Heart right ventricle (tissue), 16 donors: ENCODE measurements at regions of chr3 and their contacts with region 1.

Region 1: DNA sequence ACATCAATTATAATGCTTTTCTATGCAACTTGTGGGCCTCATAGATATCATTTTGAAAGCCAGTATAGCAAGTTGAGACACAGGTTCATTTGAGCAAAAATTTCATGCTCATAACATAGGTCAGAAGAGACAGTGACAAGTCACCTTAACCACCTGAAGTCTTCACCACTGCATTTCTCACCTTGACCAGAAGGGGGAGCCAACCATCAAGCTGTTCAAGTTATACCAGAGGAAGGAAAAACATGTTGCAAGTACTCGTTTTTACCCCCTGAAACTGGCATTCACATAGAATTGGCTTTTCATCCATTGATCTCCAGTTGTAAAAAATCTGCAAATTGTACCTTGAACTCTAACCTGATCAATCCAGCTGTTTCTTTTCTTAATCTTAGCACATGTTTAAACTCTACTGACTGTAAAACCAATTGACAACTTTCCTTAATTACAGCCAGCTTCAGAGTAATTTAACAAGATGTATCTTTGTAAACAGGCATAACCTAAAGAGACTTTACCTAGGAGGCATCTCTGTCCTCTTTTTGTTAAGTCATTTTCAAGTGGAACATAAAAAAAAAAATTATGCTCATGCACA is 1.4 kb downstream of the LMOD3 start:
- DNase-seq: peak in 1 of 2 donors; percentile 77
- ATAC-seq: peak in 6 of 8 donors; percentile 38 to 61 (median 44)
- H3K4me3 ChIP-seq: peak overlapping the region in 9 of 10 donors; percentile 28 to 58 (median 49)
- H3K27ac ChIP-seq: peak overlapping the region in 9 of 10 donors; percentile 62 to 88 (median 74)
- H3K4me1 ChIP-seq: peaks cover 0 to 10% (median 6%) of the 10 kb centered on the region in 9 donors
- H3K27me3 ChIP-seq: no peaks in the 10 kb centered on the region
- CTCF ChIP-seq: peak; percentile 78 to 98 (median 93)

Region 2: DNA sequence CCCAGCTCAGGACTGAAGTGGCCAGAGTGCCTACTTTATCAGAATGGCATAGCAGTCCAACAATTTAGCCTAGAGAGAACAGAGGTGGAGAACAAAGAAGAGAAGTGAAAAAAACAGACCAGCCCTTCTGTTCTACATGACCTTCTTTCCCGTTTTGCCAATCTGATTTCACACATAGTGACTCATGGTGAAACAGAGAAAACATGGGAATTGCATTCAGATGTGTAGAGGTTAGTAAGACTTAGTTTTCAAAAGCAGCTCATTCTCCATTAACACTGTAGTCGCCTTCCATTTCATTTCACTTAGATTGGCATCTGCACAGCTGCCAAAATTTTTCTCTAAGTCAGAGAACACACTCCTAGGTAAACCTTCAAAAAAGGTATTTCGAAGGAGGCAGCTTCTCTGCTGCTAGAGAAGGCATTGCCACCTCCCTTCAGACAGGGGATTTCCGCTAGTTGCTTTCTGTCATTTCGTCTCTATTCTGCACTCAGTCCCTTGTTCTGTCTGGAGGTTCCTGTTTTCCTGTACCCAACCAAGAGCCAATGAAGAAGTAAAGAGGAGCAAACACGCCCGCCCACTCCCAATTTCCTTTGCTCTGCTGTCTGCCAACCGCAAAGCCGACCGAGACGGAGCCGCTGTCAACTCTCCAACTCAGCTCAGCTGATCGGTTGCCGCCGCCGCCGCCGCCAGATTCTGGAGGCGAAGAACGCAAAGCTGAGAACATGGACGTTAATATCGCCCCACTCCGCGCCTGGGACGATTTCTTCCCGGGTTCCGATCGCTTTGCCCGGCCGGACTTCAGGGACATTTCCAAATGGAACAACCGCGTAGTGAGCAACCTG is 36.4 kb before region 1 on chr3 and contains the start of gene ARL6IP5:
- intact Hi-C with region 1: loop called in 3 of 10 experiments (anchors 5 kb)
- DNase-seq: peak; percentile 93 to 95
- ATAC-seq: peak; percentile 65 to 83 (median 76)
- H3K4me3 ChIP-seq: peak within 1 kb of the TSS; percentile 67 to 94 (median 91)
- H3K27ac ChIP-seq: peak within 1 kb of the TSS; percentile 91 to 97 (median 96)
- H3K4me1 ChIP-seq: peaks cover 11 to 85% (median 74%) of the 10 kb centered on the region in 9 donors
- H3K27me3 ChIP-seq: no peaks in the 10 kb centered on the region
- CTCF ChIP-seq: no peak
- total RNA-seq, gene ARL6IP5: 151 to 226 (median 195) TPM

Region 3: GRCh38 chr3:69200384-69201068 is 79.6 kb after region 1 on chr3:
- intact Hi-C with region 1: no loop called
- DNase-seq: peak in 1 of 2 donors; percentile 35
- ATAC-seq: peak; percentile 61 to 87 (median 75)
- H3K4me3 ChIP-seq: peak overlapping the region; percentile 10 to 49 (median 40)
- H3K27ac ChIP-seq: peak overlapping the region in 9 of 10 donors; percentile 28 to 81 (median 70)
- H3K4me1 ChIP-seq: peaks cover 0 to 45% (median 26%) of the 10 kb centered on the region in 9 donors
- H3K27me3 ChIP-seq: no peaks in the 10 kb centered on the region
- CTCF ChIP-seq: no peak

Region 4: GRCh38 chr3:69914395-69914794 is 793.4 kb after region 1 on chr3:
- intact Hi-C with region 1: no loop called
- DNase-seq: no peak
- ATAC-seq: peak in 6 of 8 donors; percentile 31 to 89 (median 82)
- H3K4me3 ChIP-seq: no peak overlapping the region
- H3K27ac ChIP-seq: no peak overlapping the region
- H3K4me1 ChIP-seq: peaks cover 0 to 13% (median 0%) of the 10 kb centered on the region in 9 donors
- H3K27me3 ChIP-seq: no peaks in the 10 kb centered on the region
- CTCF ChIP-seq: no peak

Region 5: GRCh38 chr3:70951316-70951715 is 1830.3 kb after region 1 on chr3:
- intact Hi-C with region 1: no loop called
- DNase-seq: no peak
- ATAC-seq: no peak
- H3K4me3 ChIP-seq: no peak overlapping the region
- H3K27ac ChIP-seq: no peak overlapping the region
- H3K4me1 ChIP-seq: peaks cover 0 to 19% (median 7%) of the 10 kb centered on the region in 9 donors
- H3K27me3 ChIP-seq: no peaks in the 10 kb centered on the region
- CTCF ChIP-seq: no peak